Activated T-helper 2 cell treated with anti-CD3 and anti-CD28 coated beads, Interferon-gamma antibody, Interleukin-2, Interleukin-4, amounts not matched to agents 10 μg/mL and 5 μg/mL and 100 μg/mL, durations not matched to agents 14 hours and 24 hours and 36 hours (primary cell): ENCODE measurements at regions of chr9 and their contacts with region 1.

Region 1: DNA sequence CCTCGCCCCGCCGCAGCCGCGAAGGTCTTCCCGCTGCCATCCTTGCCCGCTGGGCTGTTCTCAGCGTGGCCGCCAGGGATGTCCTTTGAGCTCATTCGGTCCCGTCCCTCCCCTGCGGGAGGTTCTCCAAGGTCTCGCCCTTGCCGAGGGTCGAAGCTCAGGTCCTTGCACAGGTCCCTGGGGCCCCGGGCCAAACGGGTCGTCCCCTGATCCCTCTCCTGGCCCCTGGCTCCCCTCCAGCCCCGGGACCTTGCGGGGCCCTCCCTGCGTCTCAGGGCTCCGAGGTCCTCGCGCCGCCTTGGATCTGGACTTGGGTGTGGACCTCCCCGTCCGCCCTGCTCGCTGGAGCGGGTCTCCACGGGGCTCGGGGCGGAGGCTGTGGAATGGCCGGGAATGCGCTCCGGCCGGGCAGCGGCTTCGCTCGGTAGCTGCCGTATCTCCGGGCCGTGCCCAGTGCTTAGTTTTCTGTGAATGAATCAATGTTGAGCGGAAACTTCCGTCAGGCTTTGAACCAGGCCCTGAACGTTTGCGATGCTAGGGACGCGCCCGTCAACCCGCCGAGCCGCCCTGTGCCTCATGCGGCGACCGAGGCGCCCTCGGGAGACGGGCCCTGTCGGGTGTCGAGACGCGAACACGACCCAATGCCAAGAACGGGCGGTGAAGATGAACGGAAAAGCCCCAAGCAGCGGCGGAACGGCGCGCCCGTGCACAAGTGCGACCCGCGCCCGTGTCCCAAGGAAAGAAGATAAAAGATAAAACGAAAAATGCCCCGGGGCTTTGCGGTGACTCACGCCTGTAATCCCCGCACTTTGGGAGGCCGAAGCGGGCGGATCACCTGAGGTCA is 789 bp downstream of the RNU6ATAC start:
- DNase-seq: peak; percentile 62
- H3K4me3 Mint-ChIP-seq: no peak overlapping the region
- H3K27ac Mint-ChIP-seq: no peak overlapping the region
- H3K4me1 Mint-ChIP-seq: peaks cover 9% of the 10 kb centered on the region
- H3K27me3 Mint-ChIP-seq: no peaks in the 10 kb centered on the region

Region 2: GRCh38 chr9:133955821-133956411 is 207.7 kb before region 1 on chr9:
- intact Hi-C with region 1: no loop called
- DNase-seq: no peak
- H3K4me3 Mint-ChIP-seq: no peak overlapping the region
- H3K27ac Mint-ChIP-seq: no peak overlapping the region
- H3K4me1 Mint-ChIP-seq: peaks cover 5% of the 10 kb centered on the region
- H3K27me3 Mint-ChIP-seq: no peaks in the 10 kb centered on the region

Region 3: DNA sequence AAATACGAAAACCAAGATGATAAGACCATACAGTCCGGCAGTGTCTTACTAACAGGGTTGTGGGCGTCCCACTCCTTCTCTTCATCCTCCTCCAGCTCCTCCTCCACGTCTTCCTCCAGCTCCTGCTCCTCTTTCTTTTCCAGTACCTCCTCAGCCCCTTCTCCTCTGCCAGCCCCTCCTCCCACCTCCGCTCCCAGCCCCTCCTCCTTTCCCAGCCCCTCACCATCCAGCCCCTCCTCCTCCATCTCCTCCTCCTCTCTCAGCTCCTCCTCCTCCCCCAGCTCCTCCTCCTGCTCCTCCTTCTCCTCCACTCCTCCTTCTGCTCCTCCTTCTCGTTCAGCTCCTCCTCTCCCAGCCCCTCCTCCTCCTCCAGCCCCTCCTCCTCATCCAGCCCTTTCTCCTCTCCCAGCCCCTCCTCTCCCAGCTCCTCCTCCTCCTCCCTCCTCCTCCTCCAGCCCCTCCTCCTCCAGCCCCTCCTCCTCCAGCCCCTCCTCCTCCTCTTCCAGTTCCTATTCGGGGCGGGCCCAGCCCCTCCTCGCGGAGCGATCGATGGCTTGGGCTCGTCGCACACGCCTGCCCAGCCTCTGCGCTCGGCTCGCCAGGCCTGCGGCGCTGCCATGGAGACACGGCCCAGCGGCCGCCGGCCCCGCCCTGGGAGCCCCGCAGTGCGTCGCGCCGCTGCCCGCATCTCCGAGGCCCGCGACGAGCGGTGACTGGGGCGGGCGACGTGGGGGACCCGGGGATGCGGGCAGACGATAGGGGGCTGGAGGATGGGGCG is 138.6 kb before region 1 on chr9 and contains the start of gene BRD3OS:
- intact Hi-C with region 1: loop called (anchors 1 kb)
- DNase-seq: peak; percentile 90
- H3K4me3 Mint-ChIP-seq: peak within 1 kb of the TSS; percentile 72
- H3K27ac Mint-ChIP-seq: no peak within 1 kb of the TSS
- H3K4me1 Mint-ChIP-seq: peaks cover 4% of the 10 kb centered on the region
- H3K27me3 Mint-ChIP-seq: peaks cover 3% of the 10 kb centered on the region
- total RNA-seq, gene BRD3OS: 12.3 and 15.8 TPM in 2 replicates

Region 4: DNA sequence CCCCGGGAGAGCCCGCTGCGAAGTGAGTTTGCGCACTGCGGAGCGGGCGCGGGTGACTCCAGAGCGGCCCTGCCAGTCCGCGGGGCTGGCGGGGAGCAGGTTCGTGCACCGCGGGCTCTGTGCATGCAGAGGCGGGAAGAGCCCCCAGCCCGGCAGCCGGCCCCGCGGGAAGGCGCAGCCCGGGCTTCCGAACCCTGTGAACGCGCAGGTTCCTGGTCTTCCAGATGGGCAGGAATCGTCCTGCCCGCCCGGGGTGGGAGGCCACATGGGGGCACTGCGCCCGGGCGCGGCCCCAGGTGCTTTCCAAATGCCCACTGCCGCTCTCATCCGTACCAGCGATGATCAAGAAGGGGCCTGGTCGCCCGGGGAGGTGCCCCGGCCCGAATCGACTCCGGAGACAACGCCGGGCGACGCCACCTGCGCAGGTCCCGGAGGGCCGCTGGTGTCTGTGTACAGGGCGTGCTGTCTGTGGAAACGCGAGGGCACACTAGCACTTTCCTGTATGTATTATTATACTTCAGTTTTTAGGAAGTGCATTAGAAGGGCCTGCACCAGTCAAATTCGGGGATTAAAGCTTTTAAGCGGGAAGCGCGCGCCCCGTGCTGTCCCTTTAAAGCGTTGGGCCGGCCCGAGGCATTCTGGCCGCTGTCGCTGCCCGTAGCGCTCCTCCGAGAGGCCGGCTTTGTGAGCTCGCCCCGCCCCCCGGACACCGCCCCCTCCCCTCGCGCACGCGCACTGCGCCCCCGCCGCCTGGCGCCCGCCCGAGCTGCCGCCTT is 28.0 kb before region 1 on chr9 and contains the start of gene WDR5:
- intact Hi-C with region 1: loop called (anchors 1 kb)
- DNase-seq: peak; percentile 84
- H3K4me3 Mint-ChIP-seq: peak within 1 kb of the TSS; percentile 98
- H3K27ac Mint-ChIP-seq: peak within 1 kb of the TSS; percentile 89
- H3K4me1 Mint-ChIP-seq: peaks cover 21% of the 10 kb centered on the region
- H3K27me3 Mint-ChIP-seq: no peaks in the 10 kb centered on the region
- total RNA-seq, gene WDR5: 54.0 and 58.9 TPM in 2 replicates

Region 5: GRCh38 chr9:134205672-134206310 is 42.2 kb after region 1 on chr9:
- intact Hi-C with region 1: no loop called
- DNase-seq: no peak
- H3K4me3 Mint-ChIP-seq: no peak overlapping the region
- H3K27ac Mint-ChIP-seq: no peak overlapping the region
- H3K4me1 Mint-ChIP-seq: no peaks in the 10 kb centered on the region
- H3K27me3 Mint-ChIP-seq: peaks cover 25% of the 10 kb centered on the region

Region 6: DNA sequence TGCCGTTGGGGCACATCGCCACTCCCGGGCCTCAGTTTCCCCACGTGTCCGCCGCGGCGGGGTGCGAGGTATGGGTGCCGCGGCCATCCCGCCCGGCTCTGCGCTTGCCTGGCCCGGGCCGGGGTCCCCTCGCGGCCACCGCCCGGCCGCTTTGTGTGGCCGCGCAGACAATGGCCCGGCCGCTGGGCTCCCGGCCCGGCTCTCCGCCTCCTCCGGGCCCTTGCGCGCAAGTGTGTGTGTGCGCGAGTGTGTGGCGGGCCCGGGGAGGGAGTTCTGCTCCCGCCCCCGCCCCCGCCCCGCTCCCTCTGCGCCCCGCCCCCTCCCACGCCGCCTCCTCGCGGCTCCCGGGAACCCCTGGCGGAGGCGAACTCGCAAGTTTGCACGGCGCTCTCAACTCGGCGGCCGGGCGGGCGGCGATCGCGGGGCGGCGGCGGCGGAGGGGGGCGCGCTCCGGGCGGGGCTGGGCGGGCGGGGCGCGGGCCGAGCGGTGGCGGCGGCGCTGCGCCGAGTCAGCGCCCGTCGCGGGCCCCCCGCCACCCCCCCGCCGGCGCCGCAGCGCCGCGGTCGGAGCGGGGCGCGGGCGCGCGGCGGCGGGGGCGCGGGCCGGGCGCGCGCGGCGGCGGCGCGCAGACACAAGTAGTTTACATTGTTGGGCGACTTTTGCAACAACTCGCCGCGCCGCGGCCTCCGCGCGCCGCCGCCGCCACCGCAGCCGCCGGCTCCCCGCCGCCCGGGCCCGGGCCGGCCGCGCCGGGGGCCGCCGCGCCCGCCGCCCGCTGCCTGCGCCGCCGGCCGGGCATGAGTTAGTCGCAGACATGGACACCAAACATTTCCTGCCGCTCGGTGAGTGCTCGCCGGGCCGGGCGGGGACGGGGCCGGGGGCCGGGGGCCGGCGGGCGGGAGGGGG is 162.5 kb after region 1 on chr9 and contains the start of gene RXRA:
- intact Hi-C with region 1: loop called (anchors 10 kb)
- DNase-seq: peak; percentile 22
- H3K4me3 Mint-ChIP-seq: peak within 1 kb of the TSS; percentile 68
- H3K27ac Mint-ChIP-seq: no peak within 1 kb of the TSS
- H3K4me1 Mint-ChIP-seq: peaks cover 4% of the 10 kb centered on the region
- H3K27me3 Mint-ChIP-seq: peaks cover 27% of the 10 kb centered on the region
- total RNA-seq, gene RXRA: 22.8 and 22.9 TPM in 2 replicates

Region 7: GRCh38 chr9:134391314-134392231 is 228.0 kb after region 1 on chr9:
- intact Hi-C with region 1: loop called (anchors 2 kb)
- DNase-seq: peak; percentile 55
- H3K4me3 Mint-ChIP-seq: peak overlapping the region; percentile 78
- H3K27ac Mint-ChIP-seq: peak overlapping the region; percentile 92
- H3K4me1 Mint-ChIP-seq: peaks cover 44% of the 10 kb centered on the region
- H3K27me3 Mint-ChIP-seq: peaks cover 7% of the 10 kb centered on the region